Cardiac septum (tissue), 1 donor: ENCODE measurements at regions of chr4 and their contacts with region 1.

Region 1: GRCh38 chr4:72325215-72325614 is 243.8 kb downstream of the ADAMTS3 start:
- DNase-seq: no peak

Region 2: DNA sequence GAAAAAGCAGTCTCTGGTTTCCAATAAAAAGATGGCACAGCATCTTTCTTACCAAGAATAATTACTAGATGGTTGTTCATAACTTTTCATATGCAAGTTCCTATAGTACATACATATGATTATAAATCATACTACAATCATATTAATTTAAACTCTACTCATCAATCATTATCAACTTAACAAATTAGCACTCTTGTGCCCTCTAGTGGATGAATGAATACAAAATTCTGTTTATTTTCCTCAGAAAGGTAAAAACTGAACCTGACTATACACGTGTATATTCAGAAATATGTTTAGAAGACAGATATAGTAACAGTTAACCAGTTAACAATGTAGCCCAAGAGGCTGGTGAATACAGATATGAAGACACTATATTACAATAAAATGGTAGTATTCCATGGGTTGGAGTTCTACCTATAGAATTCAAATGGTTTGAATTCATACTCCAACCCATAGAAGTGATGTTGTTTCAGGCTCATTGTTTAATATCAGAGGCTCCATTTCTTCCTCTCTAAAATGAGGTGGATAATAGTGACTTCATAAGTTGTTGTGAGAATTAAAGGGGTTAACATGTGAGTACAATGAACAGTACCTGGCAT is 143.8 kb after region 1 on chr4:
- intact Hi-C with region 1: loop called (anchors 2 kb)
- DNase-seq: no peak